Caco-2 (cell line): ENCODE measurements at regions of chr7 and their contacts with region 1.

Region 1: DNA sequence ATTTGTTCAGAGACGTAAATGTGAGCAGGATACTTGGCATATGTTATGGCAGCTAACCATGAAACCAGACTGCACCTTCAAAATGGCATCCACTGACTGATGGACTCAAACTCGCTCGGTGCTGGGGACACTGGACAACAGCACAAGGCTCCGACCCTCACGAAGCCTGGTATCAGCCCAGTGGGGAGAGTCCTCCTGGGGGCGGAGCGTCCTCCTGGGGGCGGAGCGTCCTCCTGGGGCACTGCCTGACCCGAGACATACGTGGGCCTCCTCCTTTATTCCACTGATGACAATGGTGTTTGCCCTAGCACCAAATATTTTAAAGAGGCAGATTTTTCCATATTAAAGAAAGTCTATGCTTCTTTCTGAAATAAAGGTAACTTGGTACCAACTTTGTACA is 39.5 kb downstream of the ESYT2 start:
- DNase-seq: no peak
- H3K4me3 ChIP-seq: no peak overlapping the region
- H3K4me3 Mint-ChIP-seq: no peak overlapping the region
- H3K27ac Mint-ChIP-seq: no peak overlapping the region
- H3K4me1 ChIP-seq: no peaks in the 10 kb centered on the region
- H3K4me1 Mint-ChIP-seq: peaks cover 13% of the 10 kb centered on the region
- H3K27me3 ChIP-seq: no peaks in the 10 kb centered on the region
- H3K27me3 Mint-ChIP-seq: no peaks in the 10 kb centered on the region
- CTCF ChIP-seq: no peak

Region 2: DNA sequence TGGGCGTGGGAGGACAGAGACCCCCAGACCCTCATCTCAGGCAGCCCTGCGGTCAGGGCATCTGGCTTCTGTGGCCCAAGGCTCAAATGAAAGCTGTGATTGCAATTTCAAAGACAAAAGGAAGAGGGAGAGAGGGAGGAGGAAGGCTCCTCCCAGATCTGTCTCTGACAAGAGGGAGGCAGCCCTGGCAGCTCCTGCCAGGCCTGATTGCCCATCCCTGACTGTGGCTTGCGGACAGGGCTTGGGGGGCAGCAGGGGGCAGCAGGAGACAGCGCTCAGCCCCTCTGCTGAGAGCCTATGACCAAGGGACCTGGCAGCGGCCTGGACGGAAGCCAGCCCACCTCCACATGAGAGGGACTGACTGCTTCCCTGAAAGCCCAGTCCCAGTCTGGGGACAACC is 294.1 kb before region 1 on chr7:
- CTCF ChIA-PET with region 1: no interaction called
- POLR2A ChIA-PET with region 1: no interaction called
- intact Hi-C with region 1: no loop called
- DNase-seq: peak in 1 of 2 experiments; percentile 34
- H3K4me3 ChIP-seq: no peak overlapping the region
- H3K4me3 Mint-ChIP-seq: no peak overlapping the region
- H3K27ac Mint-ChIP-seq: no peak overlapping the region
- H3K4me1 ChIP-seq: peaks cover 6% of the 10 kb centered on the region; the same call in 1 of the 2 replicates
- H3K4me1 Mint-ChIP-seq: peaks cover 6% of the 10 kb centered on the region
- H3K27me3 ChIP-seq: no peaks in the 10 kb centered on the region
- H3K27me3 Mint-ChIP-seq: no peaks in the 10 kb centered on the region
- CTCF ChIP-seq: peak in 1 of 2 experiments; percentile 16

Region 3: DNA sequence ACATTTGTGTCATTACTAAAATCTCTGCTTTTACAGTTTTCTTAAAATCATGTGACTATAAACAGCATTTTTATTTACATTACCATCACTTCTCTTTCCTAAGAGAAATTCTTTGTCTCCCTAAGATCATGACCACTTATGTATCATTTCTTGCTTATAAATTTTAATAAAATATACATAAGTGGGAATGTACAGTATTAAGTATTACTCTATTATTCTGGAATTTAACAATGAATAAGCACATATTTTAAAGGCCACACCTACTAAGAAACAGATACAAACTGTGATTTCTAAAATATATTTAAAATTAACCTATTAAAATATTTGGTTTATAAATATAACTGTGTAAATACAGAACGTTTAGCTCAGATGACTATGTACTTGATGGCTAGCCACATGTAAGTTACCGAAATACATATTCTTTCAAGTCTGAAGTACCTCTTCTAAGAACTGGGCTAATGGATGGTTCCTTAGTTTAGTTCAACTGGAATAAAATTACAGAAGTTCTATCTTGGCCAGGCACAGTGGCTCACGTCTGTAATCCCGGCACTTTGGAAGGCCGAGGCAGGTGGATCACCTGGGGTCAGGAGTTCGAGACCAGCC is 168.9 kb before region 1 on chr7:
- CTCF ChIA-PET with region 1: no interaction called
- POLR2A ChIA-PET with region 1: interaction called, 12 read pairs
- intact Hi-C with region 1: no loop called
- DNase-seq: no peak
- H3K4me3 ChIP-seq: no peak overlapping the region
- H3K4me3 Mint-ChIP-seq: no peak overlapping the region
- H3K27ac Mint-ChIP-seq: no peak overlapping the region
- H3K4me1 ChIP-seq: peaks cover 5% of the 10 kb centered on the region; the same call in 1 of the 2 replicates
- H3K4me1 Mint-ChIP-seq: no peaks in the 10 kb centered on the region
- H3K27me3 ChIP-seq: no peaks in the 10 kb centered on the region
- H3K27me3 Mint-ChIP-seq: no peaks in the 10 kb centered on the region
- CTCF ChIP-seq: no peak

Region 4: GRCh38 chr7:159126311-159127260 is 336.7 kb after region 1 on chr7:
- CTCF ChIA-PET with region 1: no interaction called
- POLR2A ChIA-PET with region 1: no interaction called
- intact Hi-C with region 1: no loop called
- DNase-seq: no peak
- H3K4me3 ChIP-seq: no peak overlapping the region
- H3K4me3 Mint-ChIP-seq: no peak overlapping the region
- H3K27ac Mint-ChIP-seq: no peak overlapping the region
- H3K4me1 ChIP-seq: no peaks in the 10 kb centered on the region
- H3K4me1 Mint-ChIP-seq: peaks cover 11% of the 10 kb centered on the region
- H3K27me3 ChIP-seq: no peaks in the 10 kb centered on the region
- H3K27me3 Mint-ChIP-seq: peaks cover 8% of the 10 kb centered on the region
- CTCF ChIP-seq: no peak